ENCODE measurements at regions of chr4 and their contacts with region 1.

Region 1: DNA sequence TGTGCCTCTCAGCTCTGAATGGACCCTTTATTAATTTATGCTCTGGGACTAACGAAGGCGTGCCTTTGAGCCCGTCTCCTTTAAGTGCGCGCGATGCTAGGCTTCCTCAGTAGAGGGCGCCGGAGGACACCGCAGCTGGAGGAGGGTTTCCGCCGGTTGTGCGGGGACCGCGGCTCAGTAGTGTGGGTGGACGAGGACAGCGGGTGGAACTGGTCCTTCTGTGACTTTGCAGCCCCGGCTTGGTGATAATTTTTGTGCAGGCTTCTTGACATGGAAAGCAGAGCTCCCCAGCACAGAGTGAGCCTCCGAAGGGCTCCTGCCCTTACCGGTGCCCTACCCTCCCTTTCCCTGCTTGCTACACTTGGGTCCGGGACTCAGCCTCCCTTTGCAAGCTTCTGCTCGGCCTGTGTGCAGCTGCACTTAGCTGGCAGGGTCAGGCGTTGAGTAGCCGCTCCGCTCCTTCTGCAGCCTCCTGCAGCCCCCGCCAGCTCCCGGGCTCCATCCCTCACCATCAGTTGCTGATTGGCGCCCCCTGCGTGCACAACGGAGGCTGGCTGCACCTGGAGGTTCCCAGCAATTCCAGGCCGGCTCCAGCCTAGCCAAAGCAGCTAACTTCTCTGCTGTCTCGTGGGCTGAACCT is 26.8 kb upstream of the BOD1L1 start:
- DNase-seq: peak; percentile 67 to 89 (median 79)
- ATAC-seq: peak; percentile 78 to 95 (median 93)
- H3K4me3 ChIP-seq: peak overlapping the region; percentile 10 to 61 (median 52)
- H3K27ac ChIP-seq: peak overlapping the region in 1 of 12 donors; percentile 6
- H3K4me1 ChIP-seq: peaks cover 0 to 20% (median 1%) of the 10 kb centered on the region in 12 donors
- H3K27me3 ChIP-seq: no peaks in the 10 kb centered on the region
- CTCF ChIP-seq: peak; percentile 66 to 86 (median 81)
- POLR2A ChIP-seq: no peak

Region 2: GRCh38 chr4:13665701-13666660 is 11.7 kb after region 1 on chr4:
- intact Hi-C with region 1: no loop called
- DNase-seq: no peak
- ATAC-seq: no peak
- H3K4me3 ChIP-seq: no peak overlapping the region
- H3K27ac ChIP-seq: no peak overlapping the region
- H3K4me1 ChIP-seq: peaks cover 0 to 5% (median 0%) of the 10 kb centered on the region in 12 donors
- H3K27me3 ChIP-seq: no peaks in the 10 kb centered on the region
- CTCF ChIP-seq: no peak
- POLR2A ChIP-seq: no peak

Region 3: DNA sequence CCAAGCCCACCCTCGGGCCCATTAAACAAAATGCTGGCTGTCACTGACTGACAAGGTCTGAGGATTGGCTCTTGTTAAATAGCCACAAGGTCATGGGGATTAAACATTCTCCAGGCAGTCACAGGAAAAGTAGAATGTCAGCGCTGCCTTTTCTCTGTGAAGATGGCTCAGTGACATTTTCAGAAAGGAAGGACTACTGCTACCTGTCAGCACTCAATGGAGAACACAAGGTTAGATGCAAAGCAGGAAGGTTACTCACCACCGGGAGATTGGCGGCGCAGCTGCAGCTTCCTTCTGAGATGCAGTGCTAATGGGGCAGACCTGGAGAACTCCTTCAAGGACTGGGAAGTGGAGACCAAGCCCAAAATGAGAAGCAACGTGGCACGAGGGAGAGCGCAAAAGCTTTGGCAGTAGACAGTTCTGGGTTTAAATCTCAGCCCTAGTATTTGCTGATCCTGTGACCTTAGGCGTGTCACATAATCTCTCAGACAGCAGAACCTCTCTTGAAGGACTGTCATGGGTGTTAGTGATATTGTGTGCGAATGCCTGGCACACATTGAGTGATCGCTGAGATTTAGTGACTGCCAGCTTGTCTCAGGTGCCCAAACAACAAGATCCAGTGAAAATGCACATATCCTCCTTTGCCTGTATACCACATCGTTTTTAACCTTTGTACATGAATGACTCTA is 186.4 kb after region 1 on chr4:
- intact Hi-C with region 1: loop called in 6 of 10 experiments (anchors 2 to 10 kb)
- DNase-seq: peak in 2 of 5 donors; percentile 30 to 33
- ATAC-seq: peak; percentile 33 to 75 (median 64)
- H3K4me3 ChIP-seq: peak overlapping the region in 9 of 12 donors; percentile 17 to 53 (median 36)
- H3K27ac ChIP-seq: peak overlapping the region in 6 of 12 donors; percentile 11 to 73 (median 41)
- H3K4me1 ChIP-seq: peaks cover 0 to 8% (median 0%) of the 10 kb centered on the region in 12 donors
- H3K27me3 ChIP-seq: no peaks in the 10 kb centered on the region
- CTCF ChIP-seq: no peak
- POLR2A ChIP-seq: no peak

Region 4: DNA sequence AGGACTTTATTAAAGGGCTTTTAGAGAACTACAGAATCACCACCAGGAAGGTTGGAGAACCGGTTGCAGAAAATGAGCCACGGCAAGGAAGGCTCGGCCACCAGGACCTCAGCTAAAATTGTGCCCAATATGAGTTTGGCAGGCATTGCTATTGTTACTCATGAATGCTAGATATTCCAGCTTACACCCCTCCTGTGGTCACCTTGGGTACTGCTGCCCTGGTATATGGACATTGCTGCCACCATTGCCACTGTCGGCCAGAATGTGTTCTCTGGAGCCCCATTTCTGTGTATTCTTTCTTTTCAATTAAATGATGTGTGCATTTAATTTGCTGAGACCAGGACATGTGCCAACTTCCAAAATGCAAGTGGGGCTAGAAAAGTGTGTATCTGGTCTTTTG is 600.0 kb after region 1 on chr4:
- intact Hi-C with region 1: loop called in 4 of 10 experiments (anchors 5 to 10 kb)
- DNase-seq: peak in 4 of 5 donors; percentile 8 to 55 (median 23)
- ATAC-seq: peak in 2 of 4 donors; percentile 62 to 67
- H3K4me3 ChIP-seq: no peak overlapping the region
- H3K27ac ChIP-seq: no peak overlapping the region
- H3K4me1 ChIP-seq: no peaks in the 10 kb centered on the region
- H3K27me3 ChIP-seq: no peaks in the 10 kb centered on the region
- CTCF ChIP-seq: peak; percentile 26 to 65 (median 46)
- POLR2A ChIP-seq: no peak

Region 5: DNA sequence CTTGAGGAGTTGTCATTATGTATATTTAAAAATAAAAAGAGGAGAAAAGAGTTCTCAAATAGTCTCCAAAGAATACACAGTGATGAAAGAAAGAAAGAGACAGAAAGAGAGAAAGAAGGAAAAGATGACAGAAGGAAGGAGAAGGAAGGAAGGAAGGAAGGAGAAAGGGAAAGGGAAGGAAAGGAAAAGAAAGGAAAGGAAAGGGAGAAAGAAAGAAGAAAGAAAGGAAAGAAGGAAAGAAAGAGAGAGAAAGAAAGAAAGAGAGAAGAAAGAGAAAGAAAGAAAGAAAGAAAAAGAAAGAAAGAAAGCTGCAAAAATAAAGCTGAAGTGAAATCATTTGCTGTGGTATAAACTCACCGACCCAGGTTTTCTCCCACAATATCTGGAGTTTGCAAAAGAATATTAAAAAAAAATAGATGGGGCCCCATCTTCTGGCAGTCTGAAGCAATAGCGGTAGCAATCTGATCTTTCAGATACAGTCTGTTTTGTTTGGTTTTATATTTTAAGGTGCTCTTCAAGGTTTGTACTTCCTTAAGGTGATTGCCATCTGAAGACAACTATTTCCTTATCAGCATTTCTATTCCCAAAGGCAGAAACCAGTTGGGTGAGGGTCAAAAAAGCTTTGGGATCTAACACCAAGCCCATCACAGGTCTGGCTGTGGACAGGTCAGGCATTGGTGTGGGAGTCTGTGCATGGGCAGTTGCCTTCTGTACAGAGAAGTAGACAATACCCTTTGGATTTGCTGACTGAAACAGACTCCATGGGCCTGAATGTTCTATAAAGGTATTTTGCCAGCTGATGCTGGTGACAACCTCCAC is 1508.4 kb after region 1 on chr4:
- intact Hi-C with region 1: loop called in 2 of 10 experiments (anchors 10 kb)
- DNase-seq: no peak
- ATAC-seq: no peak
- H3K4me3 ChIP-seq: no peak overlapping the region
- H3K27ac ChIP-seq: no peak overlapping the region
- H3K4me1 ChIP-seq: no peaks in the 10 kb centered on the region
- H3K27me3 ChIP-seq: no peaks in the 10 kb centered on the region
- CTCF ChIP-seq: peak in 10 of 12 donors; percentile 17 to 56 (median 44)
- POLR2A ChIP-seq: no peak

Measured in heart left ventricle (tissue), 16 donors.